ENCODE measurements at regions of chr5 and their contacts with region 1.

Region 1: GRCh38 chr5:40486437-40487275 is 193.1 kb upstream of the PTGER4 start:
- DNase-seq: no peak
- H3K4me3 ChIP-seq: no peak overlapping the region
- H3K27ac ChIP-seq: no peak overlapping the region
- H3K27me3 ChIP-seq: no peaks in the 10 kb centered on the region
- CTCF ChIP-seq: no peak

Region 2: GRCh38 chr5:39919876-39920275 is 566.8 kb before region 1 on chr5:
- CTCF ChIA-PET with region 1: no interaction called
- POLR2A ChIA-PET with region 1: interaction called, 15 read pairs
- DNase-seq: no peak
- H3K4me3 ChIP-seq: no peak overlapping the region
- H3K27ac ChIP-seq: no peak overlapping the region
- H3K27me3 ChIP-seq: no peaks in the 10 kb centered on the region
- CTCF ChIP-seq: no peak

Region 3: DNA sequence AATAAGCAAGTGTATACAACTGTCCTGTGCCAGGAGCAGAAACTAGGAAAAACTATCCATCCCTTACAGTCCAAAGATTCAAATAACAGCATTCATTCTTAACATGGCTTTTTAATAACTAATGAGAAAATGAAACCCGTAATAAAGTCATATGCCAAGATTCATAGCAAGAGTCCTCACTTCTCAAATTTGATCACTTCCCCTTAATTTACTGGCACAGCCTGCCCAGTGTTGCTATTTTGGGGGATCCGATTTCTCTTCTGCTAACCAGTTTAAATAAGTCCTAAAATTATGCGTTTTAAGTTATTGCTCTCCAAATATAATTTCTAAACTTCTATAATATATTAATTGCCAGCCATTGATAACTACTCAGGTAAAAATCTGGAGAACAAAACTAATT is 16.1 kb after region 1 on chr5:
- CTCF ChIA-PET with region 1: no interaction called
- POLR2A ChIA-PET with region 1: no interaction called
- DNase-seq: no peak
- H3K4me3 ChIP-seq: no peak overlapping the region
- H3K27ac ChIP-seq: no peak overlapping the region
- H3K27me3 ChIP-seq: no peaks in the 10 kb centered on the region
- CTCF ChIP-seq: no peak

Region 4: GRCh38 chr5:40831346-40832210 is 344.9 kb after region 1 on chr5:
- CTCF ChIA-PET with region 1: no interaction called
- POLR2A ChIA-PET with region 1: no interaction called
- DNase-seq: no peak
- H3K4me3 ChIP-seq: no peak overlapping the region
- H3K27ac ChIP-seq: no peak overlapping the region
- H3K27me3 ChIP-seq: no peaks in the 10 kb centered on the region
- CTCF ChIP-seq: no peak

Measured in AG04450 (cell line).